ENCODE measurements at regions of chr1 and their contacts with region 1.

Region 1: GRCh38 chr1:42777852-42778251 is 6.9 kb upstream of the TMEM269 start:
- DNase-seq: peak; percentile 40
- ATAC-seq: peak; percentile 82
- H3K4me3 ChIP-seq: no peak overlapping the region
- H3K27ac ChIP-seq: no peak overlapping the region
- H3K4me1 ChIP-seq: peaks cover 12% of the 10 kb centered on the region; the same call in 1 of the 2 replicates
- H3K27me3 ChIP-seq: no peaks in the 10 kb centered on the region
- CTCF ChIP-seq: peak; percentile 81
- EP300 ChIP-seq: no peak
- POLR2A ChIP-seq: no peak
- RAD21 ChIP-seq: peak; percentile 77

Region 2: GRCh38 chr1:42815941-42816584 is 38.2 kb after region 1 on chr1:
- CTCF ChIA-PET with region 1: no interaction called
- POLR2A ChIA-PET with region 1: no interaction called
- in situ Hi-C with region 1: no loop called
- intact Hi-C with region 1: no loop called
- DNase-seq: no peak
- ATAC-seq: peak; percentile 37
- H3K4me3 ChIP-seq: peak overlapping the region; percentile 73 to 84 (median 83)
- H3K27ac ChIP-seq: peak overlapping the region; percentile 100
- H3K4me1 ChIP-seq: peaks cover 31% of the 10 kb centered on the region
- H3K27me3 ChIP-seq: no peaks in the 10 kb centered on the region; a peak in 1 of 5 replicates
- CTCF ChIP-seq: no peak
- EP300 ChIP-seq: no peak
- POLR2A ChIP-seq: no peak; a peak in 1 of 4 replicates
- RAD21 ChIP-seq: no peak

Region 3: DNA sequence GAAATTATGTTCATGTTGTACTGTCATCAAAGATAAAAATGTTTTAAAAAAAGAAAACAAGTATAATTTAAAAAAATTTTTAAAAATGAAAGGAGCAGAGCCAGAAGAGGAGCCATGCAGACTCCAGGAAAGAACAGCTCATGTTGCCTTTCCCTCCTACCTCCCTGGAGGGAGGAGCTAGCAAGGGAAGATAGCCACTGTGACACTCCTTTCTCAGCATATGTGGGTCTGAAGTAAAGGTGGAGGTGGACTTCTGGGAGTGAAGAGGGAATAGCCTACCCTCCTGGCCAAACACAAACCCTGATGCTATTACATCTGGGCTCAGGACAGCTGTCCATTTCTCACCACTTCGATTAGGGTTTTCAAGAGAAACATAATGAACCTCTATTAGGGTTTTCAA is 126.6 kb after region 1 on chr1:
- CTCF ChIA-PET with region 1: no interaction called
- POLR2A ChIA-PET with region 1: no interaction called
- in situ Hi-C with region 1: loop called (anchors 5 kb)
- intact Hi-C with region 1: no loop called
- DNase-seq: no peak
- ATAC-seq: no peak
- H3K4me3 ChIP-seq: no peak overlapping the region
- H3K27ac ChIP-seq: no peak overlapping the region
- H3K4me1 ChIP-seq: no peaks in the 10 kb centered on the region
- H3K27me3 ChIP-seq: peaks cover 3 to 19% of the 10 kb centered on the region in 2 experiments; a peak in 3 of 5 replicates
- CTCF ChIP-seq: no peak
- EP300 ChIP-seq: no peak
- POLR2A ChIP-seq: no peak
- RAD21 ChIP-seq: no peak

Region 4: GRCh38 chr1:42913426-42914091 is 135.7 kb after region 1 on chr1:
- CTCF ChIA-PET with region 1: interaction called, 5 read pairs
- POLR2A ChIA-PET with region 1: no interaction called
- in situ Hi-C with region 1: no loop called
- intact Hi-C with region 1: loop called (anchors 1 kb)
- DNase-seq: peak; percentile 84
- ATAC-seq: peak; percentile 74
- H3K4me3 ChIP-seq: no peak overlapping the region
- H3K27ac ChIP-seq: no peak overlapping the region
- H3K4me1 ChIP-seq: no peaks in the 10 kb centered on the region
- H3K27me3 ChIP-seq: no peaks in the 10 kb centered on the region; a peak in 1 of 5 replicates
- CTCF ChIP-seq: peak; percentile 85
- EP300 ChIP-seq: no peak
- POLR2A ChIP-seq: no peak
- RAD21 ChIP-seq: peak; percentile 88